ENCODE measurements at regions of chr15 and their contacts with region 1.

Region 1: GRCh38 chr15:50315814-50316630 is 39.0 kb downstream of the GABPB1 start:
- DNase-seq: no peak
- H3K4me3 ChIP-seq: no peak overlapping the region
- H3K27me3 ChIP-seq: no peaks in the 10 kb centered on the region
- CTCF ChIP-seq: peak; percentile 56

Region 2: GRCh38 chr15:50051803-50052419 is 264.1 kb before region 1 on chr15:
- CTCF ChIA-PET with region 1: interaction called, 4 read pairs
- POLR2A ChIA-PET with region 1: interaction called, 14 read pairs
- DNase-seq: peak; percentile 28
- H3K4me3 ChIP-seq: no peak overlapping the region
- H3K27me3 ChIP-seq: no peaks in the 10 kb centered on the region
- CTCF ChIP-seq: peak; percentile 78

Region 3: GRCh38 chr15:50145451-50145872 is 170.6 kb before region 1 on chr15:
- CTCF ChIA-PET with region 1: interaction called, 12 read pairs
- POLR2A ChIA-PET with region 1: no interaction called
- DNase-seq: no peak
- H3K4me3 ChIP-seq: no peak overlapping the region
- H3K27me3 ChIP-seq: no peaks in the 10 kb centered on the region
- CTCF ChIP-seq: peak; percentile 32

Region 4: DNA sequence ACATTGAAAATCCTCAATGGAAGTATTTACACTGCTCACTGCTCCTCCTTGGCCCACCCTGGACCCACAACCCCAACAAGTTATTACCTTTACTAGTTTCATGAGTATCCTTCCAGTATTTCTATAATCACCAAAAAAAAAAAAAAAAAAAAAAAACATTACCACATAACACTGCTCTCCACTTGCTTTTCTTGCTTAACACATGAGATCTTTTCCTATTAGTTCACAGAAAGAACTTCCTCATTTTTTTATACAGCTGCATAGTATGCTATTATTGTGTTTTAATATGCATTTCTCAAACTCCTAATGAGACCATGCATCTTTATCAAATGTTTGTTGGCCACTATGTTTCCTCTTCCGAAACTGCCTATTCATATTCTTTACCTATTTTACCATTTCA is 24.4 kb after region 1 on chr15:
- CTCF ChIA-PET with region 1: interaction called, 10 read pairs
- POLR2A ChIA-PET with region 1: no interaction called
- DNase-seq: no peak
- H3K4me3 ChIP-seq: no peak overlapping the region
- H3K27me3 ChIP-seq: no peaks in the 10 kb centered on the region
- CTCF ChIP-seq: no peak

Region 5: DNA sequence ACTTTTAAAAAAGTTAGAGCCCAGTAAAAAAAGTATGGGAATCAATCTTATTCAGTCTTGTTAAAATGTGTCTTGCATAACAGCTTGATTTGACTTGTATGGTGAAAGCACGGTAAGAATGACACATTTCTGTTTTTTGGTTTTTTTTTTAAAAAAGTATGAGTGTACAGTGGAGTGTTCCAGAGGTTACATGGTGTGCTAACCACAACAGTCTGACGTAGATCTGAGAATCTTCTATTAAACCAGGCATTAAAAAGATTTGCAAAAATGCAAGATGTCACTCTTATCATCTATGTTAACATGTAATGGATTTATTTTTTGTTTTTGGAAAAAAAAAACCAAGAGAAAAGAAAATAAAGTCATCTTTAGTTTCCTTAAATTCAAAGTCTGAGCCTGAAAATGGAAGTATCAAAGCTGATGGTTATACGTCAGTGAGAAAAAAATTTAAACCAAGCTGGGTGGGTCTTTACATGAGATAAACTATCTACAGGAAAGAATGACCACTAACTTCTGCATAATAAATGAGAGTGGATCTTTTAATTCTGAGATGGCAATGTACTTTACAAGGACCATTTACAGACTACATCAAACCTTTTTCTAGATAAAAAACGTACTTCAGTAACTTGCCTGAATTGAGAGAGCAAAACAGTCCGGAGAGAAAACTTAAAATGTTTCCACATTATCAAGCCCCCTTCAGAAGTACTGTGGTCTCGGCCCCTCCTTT is 37.4 kb after region 1 on chr15:
- CTCF ChIA-PET with region 1: no interaction called
- POLR2A ChIA-PET with region 1: interaction called, 13 read pairs
- DNase-seq: peak; percentile 85
- H3K4me3 ChIP-seq: peak overlapping the region; percentile 88
- H3K27me3 ChIP-seq: no peaks in the 10 kb centered on the region
- CTCF ChIP-seq: no peak

Measured in BJ (cell line).